ENCODE measurements at regions of chr12 and their contacts with region 1.

Region 1: DNA sequence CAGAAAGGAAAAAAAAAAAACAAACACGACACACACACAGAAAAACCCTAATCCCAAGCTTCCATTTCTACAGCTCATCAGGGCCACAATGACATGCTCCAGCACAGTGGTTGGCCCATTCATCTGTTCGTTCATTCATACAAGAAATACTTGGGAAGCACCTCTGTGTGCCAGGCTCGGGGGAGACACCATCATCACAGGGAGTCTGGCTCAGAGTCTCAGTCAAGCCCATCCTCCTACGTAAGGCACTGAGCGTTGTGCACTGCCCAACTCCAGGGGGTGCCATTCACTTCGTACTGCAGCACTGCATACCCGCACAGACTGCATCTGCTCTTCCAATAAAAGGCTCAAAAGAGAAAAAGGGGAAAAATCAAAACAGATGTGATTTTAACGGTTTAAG is 15.3 kb downstream of the VPS37B start:
- DNase-seq: no peak
- H3K4me3 ChIP-seq: no peak overlapping the region
- CTCF ChIP-seq: peak; percentile 64

Region 2: DNA sequence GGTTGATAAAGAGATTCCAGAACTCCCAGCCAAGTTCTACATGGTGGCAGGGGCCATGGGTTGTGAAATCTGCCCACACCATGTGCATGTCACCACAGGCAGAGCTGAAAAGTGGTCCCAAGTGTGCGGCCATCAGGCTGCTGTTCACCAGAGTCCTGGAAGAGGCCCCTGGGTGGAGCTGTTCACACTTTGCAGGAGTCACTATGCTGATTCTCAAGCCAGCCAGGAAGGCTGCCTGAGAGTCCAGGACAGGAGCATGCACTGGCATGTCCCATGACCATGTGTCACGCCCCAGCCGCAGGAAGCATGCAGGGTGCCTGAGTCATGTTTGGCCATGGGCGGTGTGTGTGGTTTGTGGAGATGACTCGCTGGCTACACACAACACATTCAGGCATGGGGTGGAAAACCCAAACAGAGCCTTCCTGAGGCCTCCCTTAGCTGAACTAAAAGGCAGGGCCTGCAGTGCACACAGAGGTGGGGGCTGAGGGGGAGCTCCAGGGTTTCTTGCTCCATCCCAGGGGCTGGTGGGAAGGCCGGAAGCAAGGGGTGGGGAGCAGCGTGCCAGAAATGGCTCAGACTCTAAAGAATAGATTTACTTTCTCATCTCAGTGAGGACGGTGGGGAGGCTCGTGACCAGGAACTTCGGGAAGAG is 66.1 kb after region 1 on chr12:
- in situ Hi-C with region 1: loop called (anchors 5 kb)
- DNase-seq: peak; percentile 98
- H3K4me3 ChIP-seq: no peak overlapping the region
- CTCF ChIP-seq: peak; percentile 54

Region 3: GRCh38 chr12:122980183-122981046 is 99.7 kb after region 1 on chr12 and contains the start of gene ARL6IP4:
- in situ Hi-C with region 1: no loop called
- DNase-seq: no peak
- H3K4me3 ChIP-seq: peak within 1 kb of the TSS; percentile 77
- CTCF ChIP-seq: no peak